Activated B cell treated with CpG ODN at 0.5 μM for 24 hours (primary cell): ENCODE measurements at regions of chr17 and their contacts with region 1.

Region 1: DNA sequence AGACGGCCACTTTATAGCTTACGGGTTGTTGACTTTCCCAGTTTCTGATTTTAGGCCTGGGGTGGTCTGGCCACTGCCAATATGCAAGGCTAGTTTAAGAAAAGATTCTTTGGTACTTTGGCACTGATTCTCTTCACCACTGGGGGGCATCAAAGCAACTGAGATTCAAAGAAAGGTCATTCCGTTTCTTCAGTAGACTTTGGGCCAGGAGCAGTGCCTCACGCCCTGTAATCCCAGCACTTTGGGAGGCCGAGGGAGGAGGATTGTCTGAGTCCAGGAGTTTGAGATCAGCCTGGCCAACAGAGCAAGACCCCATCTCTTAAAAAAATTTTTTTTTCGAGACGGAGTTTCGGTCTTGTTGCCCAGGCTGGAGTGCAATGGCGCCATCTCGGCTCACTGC is 53.0 kb downstream of the RPA1 start:
- DNase-seq: no peak
- ATAC-seq: peak; percentile 60
- H3K4me3 Mint-ChIP-seq: no peak overlapping the region
- H3K27ac Mint-ChIP-seq: no peak overlapping the region
- H3K4me1 Mint-ChIP-seq: no peaks in the 10 kb centered on the region
- H3K27me3 Mint-ChIP-seq: no peaks in the 10 kb centered on the region
- CTCF ChIP-seq: no peak

Region 2: DNA sequence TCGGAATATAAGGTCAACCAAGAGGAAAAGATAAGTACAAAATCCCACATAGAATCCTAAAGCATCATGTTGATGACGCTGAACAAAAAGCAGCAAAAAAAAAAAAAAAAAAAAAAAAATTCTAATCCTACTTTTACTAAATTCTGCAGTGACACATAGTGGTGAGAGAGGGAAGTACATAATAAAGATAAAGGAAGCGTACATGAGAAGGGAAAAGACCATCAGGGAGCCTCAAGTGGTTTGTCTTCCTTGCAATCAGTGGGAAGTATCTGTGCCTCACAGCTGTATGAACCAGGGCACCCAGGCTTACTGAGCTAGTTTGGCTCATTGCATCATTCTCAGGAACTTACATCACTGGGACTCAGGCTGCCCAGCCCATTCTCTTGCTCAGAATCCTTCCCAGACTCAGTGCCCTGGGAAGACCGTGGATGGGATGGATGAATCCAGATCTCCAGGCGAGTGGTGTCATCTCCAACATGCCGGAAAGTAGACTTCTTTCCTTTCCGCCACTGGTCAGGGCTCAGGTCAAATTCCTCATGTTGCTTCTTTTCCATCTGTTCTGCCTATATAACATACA is 399.5 kb after region 1 on chr17:
- CTCF ChIA-PET with region 1: interaction called, 21 read pairs
- POLR2A ChIA-PET with region 1: interaction called, 6 read pairs
- intact Hi-C with region 1: loop called (anchors 1 kb)
- DNase-seq: no peak
- ATAC-seq: peak; percentile 66
- H3K4me3 Mint-ChIP-seq: no peak overlapping the region
- H3K27ac Mint-ChIP-seq: no peak overlapping the region
- H3K4me1 Mint-ChIP-seq: no peaks in the 10 kb centered on the region
- H3K27me3 Mint-ChIP-seq: no peaks in the 10 kb centered on the region
- CTCF ChIP-seq: no peak